ENCODE measurements at regions of chr17 and their contacts with region 1.

Region 1: GRCh38 chr17:5329784-5330557 is 47.9 kb downstream of the RABEP1 start:
- DNase-seq: peak in 2 of 10 donors; percentile 7 to 12
- ATAC-seq: peak; percentile 58 to 68
- H3K4me3 Mint-ChIP-seq: peak overlapping the region in 7 of 10 donors; percentile 0 to 50 (median 23)
- H3K27ac Mint-ChIP-seq: peak overlapping the region in 7 of 10 donors; percentile 24 to 86 (median 75)
- H3K4me1 Mint-ChIP-seq: peaks cover 19 to 48% (median 37%) of the 10 kb centered on the region in 4 donors
- H3K27me3 Mint-ChIP-seq: no peaks in the 10 kb centered on the region

Region 2: GRCh38 chr17:5203908-5204294 is 126.1 kb before region 1 on chr17:
- POLR2A ChIA-PET with region 1: interaction called, 11 read pairs
- DNase-seq: no peak
- ATAC-seq: no peak
- H3K4me3 Mint-ChIP-seq: no peak overlapping the region
- H3K27ac Mint-ChIP-seq: peak overlapping the region in 1 of 10 donors; percentile 71
- H3K4me1 Mint-ChIP-seq: peaks cover 5 to 29% (median 11%) of the 10 kb centered on the region in 4 donors
- H3K27me3 Mint-ChIP-seq: no peaks in the 10 kb centered on the region

Region 3: DNA sequence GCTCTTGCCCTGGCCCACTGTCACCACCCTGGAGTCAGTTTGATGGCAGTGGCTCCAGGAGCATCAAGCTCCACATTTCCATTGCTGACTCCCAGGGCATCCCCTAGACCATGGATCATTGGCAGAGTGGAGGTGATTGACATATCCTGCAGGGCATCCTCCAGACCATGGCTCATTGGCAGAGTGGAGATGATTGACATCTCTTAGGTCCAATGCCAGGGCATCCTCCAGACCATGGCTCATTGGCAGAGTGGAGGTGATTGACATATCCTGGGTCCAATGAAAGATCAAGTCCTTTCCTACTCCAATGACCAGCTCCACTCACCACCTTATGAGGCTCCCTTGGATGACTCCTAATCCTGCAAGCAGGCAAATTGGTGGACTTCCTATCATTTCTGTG is 428.7 kb after region 1 on chr17:
- POLR2A ChIA-PET with region 1: no interaction called
- DNase-seq: no peak
- ATAC-seq: no peak
- H3K4me3 Mint-ChIP-seq: no peak overlapping the region
- H3K27ac Mint-ChIP-seq: no peak overlapping the region
- H3K4me1 Mint-ChIP-seq: no peaks in the 10 kb centered on the region
- H3K27me3 Mint-ChIP-seq: peaks cover 17 to 76% (median 40%) of the 10 kb centered on the region in 5 donors